A673 (cell line): ENCODE measurements at regions of chr15 and their contacts with region 1.

Region 1: GRCh38 chr15:67611765-67612369 is 69.4 kb downstream of the MAP2K5 start:
- DNase-seq: no peak
- H3K4me3 ChIP-seq: no peak overlapping the region
- H3K27ac ChIP-seq: no peak overlapping the region
- H3K4me1 ChIP-seq: no peaks in the 10 kb centered on the region
- H3K27me3 ChIP-seq: no peaks in the 10 kb centered on the region
- CTCF ChIP-seq: no peak

Region 2: DNA sequence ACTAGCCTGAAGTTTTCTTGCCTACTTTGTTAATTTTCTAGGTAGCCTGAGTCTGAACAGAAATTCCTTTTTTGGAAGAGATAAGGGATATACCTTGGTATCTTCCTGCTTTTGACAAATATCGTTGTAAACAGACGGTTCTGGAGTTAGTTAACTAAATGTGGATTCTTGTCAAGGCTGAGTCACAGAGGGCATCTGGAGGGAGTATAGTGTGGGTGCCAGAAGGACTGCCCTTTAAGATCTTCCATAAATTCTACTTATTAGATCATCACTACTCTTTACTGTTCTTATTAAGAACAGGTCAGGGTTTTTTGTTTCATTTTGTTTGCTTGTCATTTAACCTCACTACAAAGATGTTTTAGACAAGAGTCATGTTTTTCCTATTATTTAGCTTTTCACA is 88.2 kb after region 1 on chr15:
- CTCF ChIA-PET with region 1: no interaction called
- POLR2A ChIA-PET with region 1: no interaction called
- intact Hi-C with region 1: no loop called
- DNase-seq: no peak
- H3K4me3 ChIP-seq: no peak overlapping the region
- H3K27ac ChIP-seq: no peak overlapping the region
- H3K4me1 ChIP-seq: no peaks in the 10 kb centered on the region
- H3K27me3 ChIP-seq: no peaks in the 10 kb centered on the region
- CTCF ChIP-seq: no peak

Region 3: DNA sequence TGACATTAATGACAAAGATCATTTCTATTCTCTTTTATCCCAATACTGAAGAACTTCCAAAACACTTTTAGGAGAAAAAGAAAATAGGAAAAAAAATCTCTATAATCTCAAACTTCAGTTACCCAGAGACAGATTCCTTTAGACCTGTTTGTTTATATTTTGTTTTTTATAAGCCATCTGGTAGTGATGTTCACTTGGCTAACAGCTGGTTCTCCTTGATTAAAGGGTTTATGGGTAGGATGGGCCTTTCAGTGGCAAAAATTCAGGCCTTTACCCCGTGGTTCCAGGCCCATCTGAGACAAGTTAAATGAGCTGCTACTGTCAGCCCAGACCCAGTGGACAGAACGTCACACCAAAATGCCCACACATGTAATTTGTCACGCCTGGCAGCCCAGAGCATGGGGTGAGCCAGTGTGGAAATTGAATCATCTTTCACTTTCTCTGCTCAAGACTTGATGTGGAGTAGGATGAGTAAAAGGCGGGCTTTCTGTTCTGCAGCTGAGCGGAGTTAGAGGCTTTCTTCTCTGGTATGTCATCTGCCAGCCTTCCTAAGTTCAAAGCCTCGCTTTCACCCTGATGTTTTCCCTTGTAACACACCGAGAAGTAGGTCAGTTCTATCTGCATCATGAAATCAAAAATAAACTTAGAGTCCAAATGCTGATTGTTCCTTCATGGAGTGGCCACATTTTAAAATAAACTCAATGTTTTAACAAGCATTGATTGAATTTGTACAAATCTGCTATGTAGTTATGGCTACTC is 150.9 kb after region 1 on chr15:
- CTCF ChIA-PET with region 1: no interaction called
- POLR2A ChIA-PET with region 1: no interaction called
- intact Hi-C with region 1: no loop called
- DNase-seq: no peak
- H3K4me3 ChIP-seq: no peak overlapping the region
- H3K27ac ChIP-seq: no peak overlapping the region
- H3K4me1 ChIP-seq: peaks cover 9% of the 10 kb centered on the region
- H3K27me3 ChIP-seq: no peaks in the 10 kb centered on the region
- CTCF ChIP-seq: no peak

Region 4: DNA sequence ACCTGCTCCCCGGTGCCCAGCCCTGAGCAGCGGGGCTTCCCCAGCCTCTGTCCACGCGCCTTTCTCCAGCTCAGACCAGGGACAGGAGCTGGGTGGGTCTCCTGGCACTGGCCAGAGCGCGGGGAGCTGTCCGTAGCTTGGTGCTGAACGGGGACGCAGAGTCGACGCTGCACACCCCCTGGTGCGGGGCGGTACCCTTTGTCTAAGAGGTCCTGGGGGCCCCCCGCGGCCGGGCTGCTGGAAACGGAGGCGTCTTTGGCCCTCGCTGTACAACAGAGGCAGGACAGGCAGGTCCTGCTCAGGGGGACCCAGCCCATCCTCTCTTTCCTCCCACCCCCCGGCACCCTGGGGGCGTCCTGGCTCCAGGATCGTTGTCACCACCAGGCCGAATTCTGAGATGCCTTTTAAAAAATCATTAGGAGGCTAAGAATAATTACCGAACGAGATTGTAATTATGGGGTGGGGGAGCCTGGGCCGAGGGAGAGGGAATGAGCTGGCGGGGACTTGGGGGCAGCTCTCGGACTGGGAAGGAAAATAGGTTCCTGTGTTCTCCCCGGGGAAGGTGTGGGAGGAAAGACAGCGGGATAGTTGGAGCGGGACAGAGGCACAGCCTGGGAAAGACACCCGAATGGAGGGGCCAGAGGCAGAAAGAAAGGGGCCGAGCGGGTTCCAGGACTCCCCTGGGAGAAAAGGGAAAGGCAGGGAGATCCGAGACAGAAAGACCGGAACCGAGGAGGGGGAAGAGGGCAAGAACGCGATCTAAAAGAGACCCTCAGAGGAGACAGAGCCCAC is 209.3 kb after region 1 on chr15:
- CTCF ChIA-PET with region 1: no interaction called
- POLR2A ChIA-PET with region 1: interaction called, 11 read pairs
- intact Hi-C with region 1: no loop called
- DNase-seq: no peak
- H3K4me3 ChIP-seq: no peak overlapping the region
- H3K27ac ChIP-seq: no peak overlapping the region
- H3K4me1 ChIP-seq: peaks cover 26% of the 10 kb centered on the region
- H3K27me3 ChIP-seq: peaks cover 77% of the 10 kb centered on the region
- CTCF ChIP-seq: no peak